PC-9 (cell line): ENCODE measurements at regions of chr1 and their contacts with region 1.

Region 1: DNA sequence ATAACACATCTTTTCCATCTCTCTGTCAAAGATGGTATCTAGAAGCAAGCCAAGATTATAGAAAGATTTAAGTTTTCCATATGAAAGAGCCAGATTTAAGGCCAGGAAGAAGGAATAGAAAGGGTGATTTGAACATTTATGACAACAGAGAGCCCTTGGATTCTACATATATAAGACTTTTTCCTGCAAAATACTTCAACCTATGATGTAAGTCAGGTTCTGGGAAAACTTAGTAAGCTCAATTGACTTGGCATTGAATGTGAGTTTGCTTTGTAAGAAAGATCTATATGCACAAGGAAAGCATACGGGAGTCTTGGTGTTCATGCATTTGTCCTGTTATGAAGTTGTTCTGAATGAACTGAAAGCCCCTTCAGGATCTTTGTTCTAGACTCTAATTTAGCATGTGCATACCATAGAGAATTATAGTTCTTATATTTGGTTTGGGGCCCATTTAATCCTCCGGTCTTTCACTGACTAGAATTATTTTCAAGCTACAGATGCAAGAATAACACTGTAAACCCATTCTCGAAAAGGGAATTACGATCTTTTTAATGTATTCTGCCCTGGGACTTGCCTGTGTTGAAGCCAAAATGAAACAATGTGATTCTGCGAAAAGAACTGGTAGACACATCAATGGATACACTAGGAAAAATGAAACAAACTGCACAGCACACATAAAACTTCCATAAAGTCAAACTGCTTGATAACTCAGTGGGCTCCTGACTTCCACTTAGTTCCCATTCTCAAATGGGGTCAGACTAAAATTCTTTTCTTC is 152.8 kb downstream of the DISP1 start:
- DNase-seq: no peak
- H3K4me3 ChIP-seq: no peak overlapping the region
- H3K27ac ChIP-seq: no peak overlapping the region
- H3K4me1 ChIP-seq: no peaks in the 10 kb centered on the region
- H3K27me3 ChIP-seq: no peaks in the 10 kb centered on the region
- CTCF ChIP-seq: no peak

Region 2: DNA sequence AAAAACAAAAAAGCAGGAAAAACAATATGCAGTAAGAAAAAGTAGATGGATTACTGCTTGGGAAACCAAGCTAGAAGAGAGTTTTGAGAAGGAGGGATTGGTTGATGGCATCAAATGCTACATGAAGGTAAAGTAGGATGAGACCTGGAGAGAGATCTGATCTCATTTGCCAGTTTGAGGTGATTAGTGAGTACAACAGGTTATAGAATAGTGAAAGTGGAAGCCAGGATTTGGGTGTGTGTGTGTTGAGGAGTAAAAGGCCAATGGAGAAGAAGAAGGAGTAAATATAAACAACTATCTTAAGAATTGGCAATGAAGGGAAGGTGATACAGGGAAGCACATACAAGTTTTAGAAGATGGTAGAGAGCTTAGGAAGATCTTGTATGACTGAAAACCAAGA is 76.1 kb before region 1 on chr1:
- CTCF ChIA-PET with region 1: no interaction called
- POLR2A ChIA-PET with region 1: interaction called, 14 read pairs
- intact Hi-C with region 1: no loop called
- DNase-seq: no peak
- H3K4me3 ChIP-seq: no peak overlapping the region
- H3K27ac ChIP-seq: no peak overlapping the region
- H3K4me1 ChIP-seq: peaks cover 15% of the 10 kb centered on the region
- H3K27me3 ChIP-seq: no peaks in the 10 kb centered on the region
- CTCF ChIP-seq: no peak